ENCODE measurements at regions of chr9 and their contacts with region 1.

Region 1: DNA sequence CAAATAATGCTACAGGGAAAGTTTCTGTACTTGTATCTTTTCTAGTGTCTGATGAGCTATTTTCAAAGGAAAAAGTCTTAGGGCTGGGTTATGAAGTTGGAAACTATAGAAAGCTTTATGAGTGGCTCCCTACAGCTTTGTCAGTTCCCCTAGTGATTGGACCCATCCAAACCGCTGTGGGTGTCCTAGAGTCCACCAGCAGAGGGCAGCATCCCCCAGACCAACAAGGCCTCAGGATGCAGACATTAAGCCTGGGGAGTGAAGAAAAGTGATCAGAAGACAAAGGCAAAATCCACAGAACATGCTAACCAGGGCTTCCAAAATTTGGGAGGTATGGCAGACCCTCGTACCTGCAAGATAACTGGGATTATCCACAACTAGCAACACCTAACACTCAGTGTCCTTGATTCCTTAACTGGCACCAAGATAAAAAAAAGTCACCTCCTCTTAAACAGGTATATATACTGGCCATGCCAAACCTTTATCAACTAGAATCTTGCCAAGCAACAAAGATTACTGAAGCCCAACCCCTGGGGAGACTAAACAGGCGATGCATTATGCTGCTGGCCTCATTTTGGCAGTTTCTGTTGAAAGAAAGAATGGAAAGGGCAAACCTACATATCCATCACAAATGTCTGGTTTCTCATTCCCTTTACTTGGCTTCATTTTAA is 110.4 kb upstream of the NR5A1 start:
- DNase-seq: peak; percentile 77 to 82 (median 79)
- ATAC-seq: peak; percentile 95 to 99 (median 97)
- H3K4me3 ChIP-seq: no peak overlapping the region
- H3K27ac ChIP-seq: no peak overlapping the region
- H3K4me1 ChIP-seq: peaks cover 0 to 14% (median 1%) of the 10 kb centered on the region in 4 donors
- H3K27me3 ChIP-seq: no peaks in the 10 kb centered on the region
- CTCF ChIP-seq: peak; percentile 85 to 92 (median 92)
- POLR2A ChIP-seq: no peak

Region 2: DNA sequence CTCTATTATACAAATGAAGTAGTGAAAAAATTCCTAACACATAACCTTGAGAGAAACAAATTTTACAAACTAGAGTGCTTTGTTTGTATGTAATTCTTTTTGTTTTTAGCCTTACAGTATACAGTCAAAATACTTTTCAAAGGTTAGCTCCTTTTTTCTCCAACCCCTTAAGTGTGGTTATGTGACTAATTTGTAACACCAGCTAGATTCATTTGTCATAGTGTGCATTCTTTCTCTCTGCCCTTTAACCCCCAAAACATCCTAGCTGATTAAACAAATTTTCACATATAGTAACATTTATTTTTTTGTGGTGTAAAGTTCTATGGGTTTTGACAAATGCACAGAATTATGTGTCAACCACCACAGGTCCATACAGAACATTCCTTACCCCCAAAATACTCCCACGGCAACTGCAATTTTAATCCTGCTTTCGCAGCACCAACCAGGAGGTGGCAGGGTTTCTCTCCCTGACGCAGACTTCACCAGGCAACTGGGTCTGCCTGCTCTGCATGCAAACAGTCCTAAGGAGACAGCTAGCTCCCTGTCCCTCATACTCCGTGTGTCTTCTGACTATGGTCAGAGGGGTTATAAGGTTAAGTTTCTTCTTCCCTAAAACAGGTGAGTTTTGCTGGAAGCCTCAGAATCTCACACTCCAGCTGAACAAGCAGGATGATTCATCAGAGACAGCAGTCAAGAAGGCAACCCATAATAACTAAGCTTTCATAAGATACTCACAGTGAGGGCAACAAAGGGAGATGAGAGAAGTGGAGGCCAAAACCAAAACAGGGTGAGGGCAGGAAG is 65.9 kb before region 1 on chr9:
- intact Hi-C with region 1: loop called in 1 of 2 experiments (anchors 10 kb)
- DNase-seq: peak in 2 of 3 donors; percentile 29 to 56
- ATAC-seq: peak; percentile 83 to 91 (median 86)
- H3K4me3 ChIP-seq: no peak overlapping the region
- H3K27ac ChIP-seq: no peak overlapping the region
- H3K4me1 ChIP-seq: no peaks in the 10 kb centered on the region
- H3K27me3 ChIP-seq: no peaks in the 10 kb centered on the region
- CTCF ChIP-seq: peak; percentile 52 to 61 (median 57)
- POLR2A ChIP-seq: no peak

Measured in right lobe of liver (tissue), 6 donors.